ENCODE measurements at regions of chr16 and their contacts with region 1.

Region 1: DNA sequence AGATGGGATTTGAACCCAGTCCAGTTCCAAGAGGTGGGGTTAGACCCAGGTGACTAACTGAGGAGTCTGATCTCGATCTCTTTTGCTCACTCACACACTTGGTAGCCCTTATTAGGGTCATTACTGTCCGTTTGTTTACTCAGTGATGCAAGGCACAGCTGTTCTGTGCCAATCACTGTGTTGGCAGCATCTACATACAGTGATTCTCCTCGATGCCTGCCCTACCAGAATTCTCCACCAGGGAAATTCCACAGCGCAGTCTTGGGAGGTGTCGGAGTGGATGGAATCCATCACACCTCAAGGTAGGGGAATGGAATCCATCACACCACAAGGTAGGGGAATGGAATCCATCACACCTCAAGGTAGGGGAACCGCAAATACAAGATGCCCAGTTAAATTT is 279.6 kb downstream of the MAF start:
- DNase-seq: no peak
- H3K4me3 ChIP-seq: no peak overlapping the region
- H3K27ac ChIP-seq: no peak overlapping the region
- H3K4me1 ChIP-seq: peaks cover 6% of the 10 kb centered on the region
- H3K27me3 ChIP-seq: no peaks in the 10 kb centered on the region
- CTCF ChIP-seq: no peak
- EP300 ChIP-seq: no peak
- POLR2A ChIP-seq: no peak

Region 2: DNA sequence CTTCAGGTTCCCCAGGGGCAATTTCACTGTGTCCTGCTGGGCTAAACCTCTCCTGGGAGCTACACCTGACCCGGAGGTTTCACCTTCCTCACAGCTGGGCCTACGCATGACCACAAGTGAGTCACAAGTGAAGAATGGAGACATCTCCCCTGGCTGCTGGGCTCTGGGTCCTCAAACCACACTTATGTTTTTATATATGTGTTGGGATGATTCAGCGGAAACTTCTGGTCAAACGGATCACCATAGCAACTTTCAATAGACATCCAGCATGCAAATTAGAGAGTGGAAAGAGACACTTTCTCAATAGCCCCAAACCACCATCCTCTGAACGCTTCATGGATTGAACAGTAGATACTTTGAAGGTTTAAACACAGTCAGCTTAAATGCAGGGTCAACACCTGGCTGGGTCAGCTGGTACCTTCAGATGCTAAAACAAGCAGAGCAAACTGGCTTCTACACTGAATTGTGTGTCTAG is 307.6 kb after region 1 on chr16:
- intact Hi-C with region 1: loop called in 1 of 4 experiments (anchors 5 kb)
- DNase-seq: no peak
- H3K4me3 ChIP-seq: no peak overlapping the region
- H3K27ac ChIP-seq: no peak overlapping the region
- H3K4me1 ChIP-seq: no peaks in the 10 kb centered on the region
- H3K27me3 ChIP-seq: no peaks in the 10 kb centered on the region
- CTCF ChIP-seq: no peak
- EP300 ChIP-seq: no peak
- POLR2A ChIP-seq: no peak

Measured in ovary (tissue), 10 donors.